Left cardiac atrium (tissue), 4 donors: ENCODE measurements at regions of chr15 and their contacts with region 1.

Region 1: DNA sequence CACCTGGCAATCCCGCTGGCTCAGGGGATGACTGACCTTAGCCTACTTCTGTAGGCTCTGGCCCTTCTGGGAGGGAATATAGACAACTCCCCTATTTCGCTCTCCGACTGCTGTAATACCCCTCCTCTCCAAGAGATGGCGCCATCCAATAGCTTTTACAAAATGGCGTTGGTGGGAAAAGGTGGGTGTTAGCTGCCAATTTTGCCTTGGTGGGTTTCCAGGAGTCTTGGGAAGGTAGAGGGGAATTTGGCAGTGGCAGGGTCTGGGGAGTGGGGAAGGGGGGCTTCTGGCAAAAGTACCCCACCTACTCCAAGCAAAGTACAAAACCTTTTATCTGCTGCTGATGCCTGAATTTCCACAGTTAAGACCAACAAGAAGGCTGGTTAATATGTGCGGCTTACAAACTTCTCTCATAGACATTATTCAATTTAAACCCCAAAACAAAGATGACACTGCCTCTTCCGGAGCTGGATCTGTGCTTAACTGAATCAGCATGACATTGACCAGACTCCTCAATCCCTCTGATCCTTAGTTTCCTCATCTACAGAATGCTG is 62.1 kb downstream of the RASGRF1 start:
- DNase-seq: no peak
- ATAC-seq: peak in 1 of 2 donors; percentile 14

Region 2: GRCh38 chr15:78960308-78960707 is 68.2 kb before region 1 on chr15:
- intact Hi-C with region 1: no loop called
- DNase-seq: no peak
- ATAC-seq: no peak

Region 3: DNA sequence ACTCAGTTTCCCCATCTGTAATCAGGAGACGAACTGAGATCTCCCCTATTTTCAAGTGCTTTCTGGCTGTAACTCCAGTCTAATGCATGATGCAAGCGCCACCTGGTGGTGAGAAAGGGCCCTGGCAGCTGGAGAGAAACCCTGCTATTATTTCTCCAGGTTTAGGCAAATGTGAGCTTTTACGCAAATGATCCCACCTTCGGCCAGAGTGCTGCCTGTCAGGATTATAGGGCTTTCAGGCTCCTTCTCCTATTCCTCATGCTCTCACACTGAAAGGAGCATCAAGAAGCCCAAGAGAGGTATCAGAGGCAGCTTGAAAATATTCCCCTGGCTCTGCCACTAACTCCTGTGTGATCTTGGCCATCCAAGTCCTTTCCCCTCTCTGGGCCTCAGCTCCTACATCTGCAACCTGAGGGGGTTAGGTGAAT is 156.0 kb after region 1 on chr15:
- intact Hi-C with region 1: loop called (anchors 1 to 2 kb)
- DNase-seq: peak; percentile 78
- ATAC-seq: peak; percentile 55 to 59